WTC11 (cell line): ENCODE measurements at regions of chr6 and their contacts with region 1.

Region 1: DNA sequence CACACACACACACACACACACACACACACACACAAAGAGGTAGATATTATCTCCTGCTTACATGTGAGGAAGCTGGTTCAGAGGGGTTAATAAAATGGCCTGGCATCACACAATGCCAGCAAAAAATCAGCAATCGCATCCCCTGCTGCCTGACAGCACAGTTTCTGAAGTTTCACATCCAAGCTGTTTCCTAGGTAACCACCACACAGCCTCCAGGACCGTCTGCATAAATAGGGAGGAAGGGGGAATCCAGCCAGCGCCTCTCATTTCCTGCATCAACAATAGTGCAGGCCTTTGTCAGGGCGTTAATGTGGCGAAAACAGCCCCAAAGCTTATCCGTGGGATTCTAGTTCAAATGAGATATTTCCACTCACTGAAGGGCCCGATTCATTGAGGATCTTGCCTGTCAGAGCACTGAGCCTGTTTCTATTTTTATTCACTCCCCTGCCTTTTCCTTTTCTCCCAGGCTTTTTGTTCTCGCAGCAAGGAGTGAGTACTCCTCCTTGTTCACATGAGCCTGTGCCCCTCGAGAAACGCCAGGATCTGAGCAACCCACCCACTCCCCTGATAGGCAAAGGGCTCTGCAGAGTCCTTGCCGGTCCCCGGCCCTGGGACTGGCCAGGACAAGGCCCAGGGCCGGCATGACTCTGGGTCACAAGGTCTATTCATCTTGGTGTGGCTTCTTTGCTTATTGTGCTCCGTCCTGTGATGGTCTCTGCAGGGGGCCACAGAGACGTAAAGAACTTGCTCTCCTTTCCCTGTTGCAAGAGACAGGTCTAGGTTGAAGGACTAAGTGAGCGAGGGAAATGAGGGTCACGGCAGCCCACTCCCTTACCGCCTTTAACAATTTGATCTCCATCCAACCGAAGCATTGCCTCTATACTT is 32.7 kb downstream of the TUBB2B start:
- DNase-seq: no peak
- ATAC-seq: peak; percentile 65
- H3K4me3 Mint-ChIP-seq: no peak overlapping the region
- H3K27ac Mint-ChIP-seq: no peak overlapping the region
- H3K4me1 Mint-ChIP-seq: peaks cover 17% of the 10 kb centered on the region
- H3K27me3 Mint-ChIP-seq: no peaks in the 10 kb centered on the region
- CTCF ChIP-seq: no peak

Region 2: GRCh38 chr6:3125815-3126214 is 69.0 kb before region 1 on chr6:
- CTCF ChIA-PET with region 1: interaction called, 12 read pairs
- POLR2A ChIA-PET with region 1: no interaction called
- DNase-seq: no peak
- ATAC-seq: peak; percentile 24; the same call in 1 of the 2 replicates
- H3K4me3 Mint-ChIP-seq: no peak overlapping the region
- H3K27ac Mint-ChIP-seq: peak overlapping the region; percentile 41
- H3K4me1 Mint-ChIP-seq: peaks cover 8% of the 10 kb centered on the region; the same call in 1 of the 2 replicates
- H3K27me3 Mint-ChIP-seq: no peaks in the 10 kb centered on the region
- CTCF ChIP-seq: no peak

Region 3: GRCh38 chr6:3209114-3210023 is 14.6 kb after region 1 on chr6:
- CTCF ChIA-PET with region 1: interaction called, 23 read pairs
- POLR2A ChIA-PET with region 1: interaction called, 3 read pairs
- DNase-seq: peak; percentile 79
- ATAC-seq: peak; percentile 98
- H3K4me3 Mint-ChIP-seq: peak overlapping the region; percentile 40
- H3K27ac Mint-ChIP-seq: peak overlapping the region; percentile 80
- H3K4me1 Mint-ChIP-seq: peaks cover 27% of the 10 kb centered on the region
- H3K27me3 Mint-ChIP-seq: no peaks in the 10 kb centered on the region
- CTCF ChIP-seq: no peak

Region 4: GRCh38 chr6:3220366-3220765 is 25.6 kb after region 1 on chr6:
- CTCF ChIA-PET with region 1: no interaction called
- POLR2A ChIA-PET with region 1: no interaction called
- DNase-seq: no peak
- ATAC-seq: no peak
- H3K4me3 Mint-ChIP-seq: no peak overlapping the region
- H3K27ac Mint-ChIP-seq: no peak overlapping the region
- H3K4me1 Mint-ChIP-seq: peaks cover 23% of the 10 kb centered on the region
- H3K27me3 Mint-ChIP-seq: peaks cover 6% of the 10 kb centered on the region; the same call in 1 of the 2 replicates
- CTCF ChIP-seq: no peak